A673 (cell line): ENCODE measurements at regions of chr6 and their contacts with region 1.

Region 1: DNA sequence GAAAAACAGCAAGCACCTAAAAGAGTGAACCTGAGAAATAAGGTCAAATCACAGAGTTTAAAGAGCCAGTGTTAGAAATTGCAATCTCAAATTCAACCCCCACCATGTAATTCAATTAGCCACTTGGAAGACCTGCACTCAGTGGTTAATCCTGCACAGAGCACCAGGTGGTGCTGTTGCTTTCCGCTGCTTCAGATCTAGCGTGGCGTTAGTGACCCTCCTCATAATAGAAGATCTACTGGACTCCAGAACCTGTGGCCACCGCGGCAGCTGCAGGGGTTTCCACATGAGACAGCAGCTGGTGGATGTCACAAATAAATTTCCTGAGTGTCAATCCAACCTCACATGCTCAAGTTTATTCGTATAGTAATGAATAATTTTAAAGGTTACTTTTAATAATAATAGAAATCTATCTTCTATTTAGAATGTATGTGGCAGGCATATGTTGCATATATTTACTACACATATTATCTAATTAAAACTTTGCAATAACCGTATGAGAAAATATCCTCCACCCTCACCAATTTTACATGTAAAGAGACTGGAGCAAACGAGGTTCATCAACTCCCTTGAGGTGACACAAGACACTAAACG is 84.4 kb downstream of the SYNE1 start:
- DNase-seq: peak; percentile 80
- H3K4me3 ChIP-seq: no peak overlapping the region
- H3K27ac ChIP-seq: no peak overlapping the region
- H3K4me1 ChIP-seq: no peaks in the 10 kb centered on the region
- H3K27me3 ChIP-seq: no peaks in the 10 kb centered on the region
- CTCF ChIP-seq: peak; percentile 91

Region 2: DNA sequence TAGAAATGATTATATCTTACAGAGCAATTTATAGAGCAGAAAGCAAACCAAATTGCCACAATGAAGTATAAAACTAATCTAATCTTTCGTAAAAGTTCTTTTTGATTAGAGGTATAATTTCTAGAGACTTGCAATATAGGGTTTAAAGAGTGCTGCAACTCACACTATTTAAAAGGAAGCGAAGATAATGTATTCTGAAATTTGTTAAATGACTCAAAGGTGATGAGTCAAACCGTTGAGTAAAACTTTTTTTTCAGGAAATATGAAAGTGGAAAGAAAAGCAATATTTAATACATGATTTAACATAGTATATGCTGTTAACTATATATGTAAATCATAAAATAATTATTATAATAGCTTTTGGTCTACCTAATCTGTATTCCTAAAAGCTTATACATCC is 49.2 kb before region 1 on chr6:
- CTCF ChIA-PET with region 1: no interaction called
- POLR2A ChIA-PET with region 1: no interaction called
- intact Hi-C with region 1: no loop called
- DNase-seq: no peak
- H3K4me3 ChIP-seq: no peak overlapping the region
- H3K27ac ChIP-seq: no peak overlapping the region
- H3K4me1 ChIP-seq: no peaks in the 10 kb centered on the region
- H3K27me3 ChIP-seq: no peaks in the 10 kb centered on the region
- CTCF ChIP-seq: no peak

Region 3: GRCh38 chr6:152642989-152643388 is 90.3 kb after region 1 on chr6:
- CTCF ChIA-PET with region 1: interaction called, 10 read pairs
- POLR2A ChIA-PET with region 1: no interaction called
- intact Hi-C with region 1: loop called (anchors 1 kb)
- DNase-seq: peak; percentile 66
- H3K4me3 ChIP-seq: no peak overlapping the region
- H3K27ac ChIP-seq: no peak overlapping the region
- H3K4me1 ChIP-seq: no peaks in the 10 kb centered on the region
- H3K27me3 ChIP-seq: peaks cover 8% of the 10 kb centered on the region
- CTCF ChIP-seq: peak; percentile 70

Region 4: GRCh38 chr6:152669895-152670294 is 117.2 kb after region 1 on chr6:
- CTCF ChIA-PET with region 1: no interaction called
- POLR2A ChIA-PET with region 1: no interaction called
- intact Hi-C with region 1: loop called (anchors 1 kb)
- DNase-seq: peak; percentile 40
- H3K4me3 ChIP-seq: no peak overlapping the region
- H3K27ac ChIP-seq: no peak overlapping the region
- H3K4me1 ChIP-seq: no peaks in the 10 kb centered on the region
- H3K27me3 ChIP-seq: no peaks in the 10 kb centered on the region
- CTCF ChIP-seq: peak; percentile 55

Region 5: DNA sequence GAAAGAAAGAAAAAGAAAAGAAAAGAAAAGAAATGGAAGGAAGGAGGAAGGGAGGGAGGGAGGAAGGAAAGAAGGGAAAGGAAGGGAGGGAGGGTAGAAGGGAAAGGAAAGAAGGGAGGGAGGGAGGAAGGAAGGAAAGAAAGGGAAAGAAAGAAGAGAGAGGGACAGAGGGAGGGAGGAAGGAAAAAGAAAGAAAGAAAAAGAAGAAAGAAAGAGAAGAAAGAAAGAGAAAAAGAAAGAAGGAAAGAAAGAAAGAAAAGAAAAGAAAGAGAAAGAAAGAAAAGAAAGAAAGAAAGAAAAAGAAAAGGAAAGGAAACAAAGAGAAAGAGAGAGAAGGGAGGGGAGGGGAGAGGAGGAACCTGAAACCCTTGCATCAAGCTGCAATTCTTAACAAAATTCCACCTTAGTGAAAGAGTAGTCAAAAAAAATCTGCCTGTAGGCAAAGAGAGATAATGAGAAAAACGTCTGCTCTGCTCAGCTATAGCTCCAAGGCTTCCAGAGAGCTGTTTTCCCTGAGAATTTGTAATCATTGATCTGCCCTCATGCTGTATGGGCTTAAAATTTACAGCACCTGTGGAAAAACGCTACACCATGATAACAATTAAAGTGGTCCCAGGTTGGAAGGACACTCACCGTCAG is 128.3 kb after region 1 on chr6:
- CTCF ChIA-PET with region 1: no interaction called
- POLR2A ChIA-PET with region 1: no interaction called
- intact Hi-C with region 1: no loop called
- DNase-seq: no peak
- H3K4me3 ChIP-seq: no peak overlapping the region
- H3K27ac ChIP-seq: no peak overlapping the region
- H3K4me1 ChIP-seq: no peaks in the 10 kb centered on the region
- H3K27me3 ChIP-seq: no peaks in the 10 kb centered on the region
- CTCF ChIP-seq: no peak